ENCODE measurements at regions of chr12 and their contacts with region 1.

Region 1: DNA sequence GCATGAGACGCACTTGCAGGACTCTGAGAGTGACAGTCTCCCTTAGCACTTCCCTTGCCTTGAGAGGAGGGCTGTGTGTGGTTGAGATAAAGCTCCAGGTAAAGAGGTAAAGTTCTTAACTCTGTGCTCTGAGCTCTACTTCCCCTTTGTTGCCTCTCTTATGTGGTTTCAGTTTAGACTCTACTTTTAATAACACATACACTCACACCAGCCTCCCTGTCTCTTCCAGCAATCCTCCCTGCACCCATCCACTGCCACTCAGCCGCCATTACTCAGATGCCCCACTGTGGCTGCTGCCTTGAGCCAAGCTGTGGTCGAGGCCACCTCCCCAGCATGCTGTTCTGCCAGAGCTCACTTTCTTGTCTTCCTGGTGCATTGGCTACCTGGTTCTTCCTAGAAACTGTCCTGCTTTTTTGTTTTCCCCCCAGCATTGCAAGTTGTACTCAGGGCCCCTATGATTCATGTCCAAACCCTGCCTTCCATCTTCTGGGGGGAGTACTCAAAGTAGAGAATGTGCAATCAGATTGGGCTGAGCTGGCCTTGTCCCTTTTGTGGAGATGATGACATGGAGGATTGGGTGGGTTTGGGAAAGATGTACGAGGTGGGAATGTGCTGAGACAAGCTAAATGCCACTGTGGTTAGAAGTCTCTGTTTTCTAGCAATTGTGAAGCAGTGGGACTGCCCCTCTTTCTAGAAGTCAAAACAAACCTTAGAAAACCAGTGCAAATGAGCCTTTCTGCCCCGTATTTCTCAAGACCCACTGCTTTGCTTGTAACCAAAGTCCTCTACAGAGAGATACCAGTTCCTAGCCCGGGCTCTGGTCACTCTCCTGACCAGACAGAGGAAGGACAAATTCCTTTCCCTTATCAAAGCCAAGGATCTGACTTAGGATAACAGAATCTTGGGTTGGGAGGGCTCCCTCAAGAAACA is 115.6 kb upstream of the PARP11 start:
- DNase-seq: peak; percentile 54
- H3K4me3 Mint-ChIP-seq: peak overlapping the region; percentile 20
- H3K27ac Mint-ChIP-seq: peak overlapping the region; percentile 67
- H3K4me1 Mint-ChIP-seq: peaks cover 32% of the 10 kb centered on the region
- H3K27me3 Mint-ChIP-seq: no peaks in the 10 kb centered on the region

Region 2: GRCh38 chr12:3964439-3964838 is 24.3 kb before region 1 on chr12:
- CTCF ChIA-PET with region 1: interaction called, 12 read pairs
- intact Hi-C with region 1: no loop called
- DNase-seq: peak; percentile 48
- H3K4me3 Mint-ChIP-seq: no peak overlapping the region
- H3K27ac Mint-ChIP-seq: no peak overlapping the region
- H3K4me1 Mint-ChIP-seq: peaks cover 20% of the 10 kb centered on the region
- H3K27me3 Mint-ChIP-seq: no peaks in the 10 kb centered on the region

Region 3: DNA sequence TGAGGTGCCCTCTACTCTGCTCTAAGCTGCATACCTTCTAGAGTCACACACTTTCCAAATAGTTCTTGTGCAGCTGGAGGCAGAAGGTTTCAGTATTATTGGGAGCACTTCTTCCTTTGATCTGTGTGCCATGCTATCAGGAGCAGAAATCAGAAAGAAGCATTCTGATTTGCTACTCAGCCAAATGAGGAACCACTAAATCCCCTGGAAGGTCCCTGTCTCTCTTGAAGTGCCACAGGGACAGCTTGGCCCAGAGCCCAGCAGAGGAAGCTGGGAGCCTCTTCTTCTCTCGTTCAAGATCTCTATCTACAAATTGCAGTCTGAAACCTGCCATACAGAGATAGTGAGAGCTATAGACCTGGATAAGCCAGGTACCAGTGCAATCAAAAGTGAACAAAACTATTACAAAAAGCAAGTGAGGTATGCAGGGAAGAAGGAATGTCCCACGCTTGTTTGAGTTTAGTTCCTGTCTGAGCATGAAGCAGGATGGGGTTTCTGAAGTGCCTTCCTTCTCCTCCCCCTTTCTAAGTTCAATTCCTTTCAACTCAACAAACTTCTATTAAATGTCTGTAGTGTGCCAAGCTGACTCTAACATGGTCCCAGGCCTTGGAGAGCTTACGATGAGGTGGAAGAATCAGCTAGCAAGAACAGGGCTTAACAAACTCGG is 14.7 kb before region 1 on chr12:
- CTCF ChIA-PET with region 1: interaction called, 5 read pairs
- intact Hi-C with region 1: loop called (anchors 1 kb)
- DNase-seq: peak; percentile 51
- H3K4me3 Mint-ChIP-seq: peak overlapping the region; percentile 60
- H3K27ac Mint-ChIP-seq: peak overlapping the region; percentile 86
- H3K4me1 Mint-ChIP-seq: peaks cover 61% of the 10 kb centered on the region
- H3K27me3 Mint-ChIP-seq: no peaks in the 10 kb centered on the region